ENCODE measurements at regions of chrX and their contacts with region 1.

Region 1: DNA sequence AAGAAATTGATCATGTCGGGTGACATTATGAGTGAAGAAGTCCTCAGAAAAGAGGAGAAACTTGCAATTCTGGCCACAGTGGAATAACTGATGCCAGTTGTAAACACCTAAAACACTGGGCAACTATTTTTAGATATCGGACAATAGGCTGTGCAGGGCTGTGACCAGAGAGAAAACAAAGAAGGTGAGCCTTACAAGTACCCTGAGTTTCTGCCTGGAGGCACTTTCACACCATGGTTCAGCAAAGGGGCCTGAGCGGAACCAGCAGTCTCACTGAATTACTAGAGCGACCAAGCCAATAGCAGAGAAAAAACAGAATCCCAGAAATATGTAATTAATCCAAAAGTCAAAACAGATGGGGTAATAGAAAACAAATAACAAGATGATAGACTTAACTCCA is 11.2 kb downstream of the IRAK1 start:
- DNase-seq: no peak
- ATAC-seq: no peak
- H3K4me3 Mint-ChIP-seq: peak overlapping the region; percentile 73
- H3K27ac Mint-ChIP-seq: peak overlapping the region; percentile 96
- H3K4me1 Mint-ChIP-seq: peaks cover 59% of the 10 kb centered on the region
- H3K27me3 Mint-ChIP-seq: no peaks in the 10 kb centered on the region
- CTCF ChIP-seq: no peak

Region 2: GRCh38 chrX:153981771-153982533 is 26.6 kb before region 1 on chrX:
- CTCF ChIA-PET with region 1: interaction called, 7 read pairs
- POLR2A ChIA-PET with region 1: interaction called, 19 read pairs
- intact Hi-C with region 1: loop called (anchors 2 kb)
- DNase-seq: no peak
- ATAC-seq: no peak
- H3K4me3 Mint-ChIP-seq: peak overlapping the region; percentile 55
- H3K27ac Mint-ChIP-seq: peak overlapping the region; percentile 92
- H3K4me1 Mint-ChIP-seq: peaks cover 55% of the 10 kb centered on the region
- H3K27me3 Mint-ChIP-seq: no peaks in the 10 kb centered on the region
- CTCF ChIP-seq: no peak

Region 3: DNA sequence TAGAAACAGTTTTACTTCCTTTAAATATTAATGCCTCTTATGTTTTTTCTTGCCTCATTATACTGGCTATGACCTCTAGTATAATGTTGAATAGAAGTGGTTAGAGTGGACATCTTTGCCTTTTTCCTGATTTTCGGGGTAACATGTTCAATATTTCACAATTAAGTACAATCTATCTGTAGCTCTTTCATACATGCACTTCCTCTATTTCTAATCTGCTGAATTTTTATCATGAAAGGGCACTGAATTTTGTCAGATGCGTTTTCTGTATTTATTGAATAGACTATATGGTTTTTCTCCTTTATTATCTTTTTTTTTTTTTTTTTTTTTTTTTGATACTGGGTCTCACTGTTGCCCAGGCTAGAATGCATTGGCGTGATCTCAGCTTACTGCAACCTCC is 60.0 kb after region 1 on chrX:
- CTCF ChIA-PET with region 1: no interaction called
- POLR2A ChIA-PET with region 1: interaction called, 12 read pairs
- intact Hi-C with region 1: no loop called
- DNase-seq: no peak
- ATAC-seq: no peak
- H3K4me3 Mint-ChIP-seq: no peak overlapping the region
- H3K27ac Mint-ChIP-seq: no peak overlapping the region
- H3K4me1 Mint-ChIP-seq: peaks cover 49% of the 10 kb centered on the region
- H3K27me3 Mint-ChIP-seq: no peaks in the 10 kb centered on the region
- CTCF ChIP-seq: no peak

Region 4: GRCh38 chrX:155505296-155505695 is 1496.8 kb after region 1 on chrX:
- CTCF ChIA-PET with region 1: no interaction called
- POLR2A ChIA-PET with region 1: no interaction called
- intact Hi-C with region 1: no loop called
- DNase-seq: no peak
- ATAC-seq: no peak
- H3K4me3 Mint-ChIP-seq: no peak overlapping the region
- H3K27ac Mint-ChIP-seq: no peak overlapping the region
- H3K4me1 Mint-ChIP-seq: no peaks in the 10 kb centered on the region
- H3K27me3 Mint-ChIP-seq: no peaks in the 10 kb centered on the region
- CTCF ChIP-seq: no peak

Measured in activated B cell treated with CpG ODN at 0.5 μM for 24 hours (primary cell).